Activated CD4-positive, alpha-beta T cell treated with anti-CD3 and anti-CD28 coated beads for 36 hours (primary cell): ENCODE measurements at regions of chr3 and their contacts with region 1.

Region 1: GRCh38 chr3:183641882-183642281 is 6.5 kb downstream of the KLHL24 start:
- DNase-seq: no peak
- ATAC-seq: no peak
- H3K4me3 Mint-ChIP-seq: no peak overlapping the region
- H3K27ac Mint-ChIP-seq: no peak overlapping the region
- H3K4me1 Mint-ChIP-seq: peaks cover 42% of the 10 kb centered on the region
- H3K27me3 Mint-ChIP-seq: no peaks in the 10 kb centered on the region

Region 2: GRCh38 chr3:183662099-183662498 is 20.2 kb after region 1 on chr3:
- CTCF ChIA-PET with region 1: interaction called, 4 read pairs
- POLR2A ChIA-PET with region 1: interaction called, 4 read pairs
- intact Hi-C with region 1: loop called in 1 of 2 experiments (anchors 2 kb)
- DNase-seq: no peak
- ATAC-seq: no peak
- H3K4me3 Mint-ChIP-seq: no peak overlapping the region
- H3K27ac Mint-ChIP-seq: no peak overlapping the region
- H3K4me1 Mint-ChIP-seq: peaks cover 12% of the 10 kb centered on the region
- H3K27me3 Mint-ChIP-seq: no peaks in the 10 kb centered on the region

Region 3: DNA sequence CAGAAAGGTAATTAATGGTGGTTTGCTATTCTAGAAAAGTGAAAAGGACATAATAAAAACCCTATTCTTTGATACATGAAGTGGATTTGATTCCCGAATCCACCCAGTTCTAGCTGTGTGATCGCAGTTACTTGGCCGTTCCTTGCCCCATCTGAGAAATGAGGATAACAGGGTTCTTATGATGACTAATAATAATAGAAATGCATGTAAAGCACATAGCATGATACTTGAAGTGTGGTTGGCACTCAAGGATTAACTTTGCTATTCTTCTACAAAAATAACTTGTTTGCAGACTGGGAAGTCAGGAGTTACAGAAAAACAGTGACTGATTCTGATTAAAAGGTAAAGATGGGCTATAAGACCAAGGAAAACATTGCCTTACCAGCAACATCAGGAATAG is 216.0 kb after region 1 on chr3:
- CTCF ChIA-PET with region 1: no interaction called
- POLR2A ChIA-PET with region 1: no interaction called
- intact Hi-C with region 1: no loop called
- DNase-seq: no peak
- ATAC-seq: no peak
- H3K4me3 Mint-ChIP-seq: no peak overlapping the region
- H3K27ac Mint-ChIP-seq: no peak overlapping the region
- H3K4me1 Mint-ChIP-seq: peaks cover 2% of the 10 kb centered on the region
- H3K27me3 Mint-ChIP-seq: no peaks in the 10 kb centered on the region